MCF 10A (cell line): ENCODE measurements at regions of chr7 and their contacts with region 1.

Region 1: GRCh38 chr7:121126801-121127534 is 138.5 kb downstream of the CPED1 start:
- DNase-seq: peak; percentile 39
- H3K4me3 Mint-ChIP-seq: no peak overlapping the region
- H3K27ac Mint-ChIP-seq: no peak overlapping the region
- H3K4me1 Mint-ChIP-seq: no peaks in the 10 kb centered on the region
- H3K27me3 Mint-ChIP-seq: no peaks in the 10 kb centered on the region
- CTCF ChIP-seq: peak; percentile 39

Region 2: DNA sequence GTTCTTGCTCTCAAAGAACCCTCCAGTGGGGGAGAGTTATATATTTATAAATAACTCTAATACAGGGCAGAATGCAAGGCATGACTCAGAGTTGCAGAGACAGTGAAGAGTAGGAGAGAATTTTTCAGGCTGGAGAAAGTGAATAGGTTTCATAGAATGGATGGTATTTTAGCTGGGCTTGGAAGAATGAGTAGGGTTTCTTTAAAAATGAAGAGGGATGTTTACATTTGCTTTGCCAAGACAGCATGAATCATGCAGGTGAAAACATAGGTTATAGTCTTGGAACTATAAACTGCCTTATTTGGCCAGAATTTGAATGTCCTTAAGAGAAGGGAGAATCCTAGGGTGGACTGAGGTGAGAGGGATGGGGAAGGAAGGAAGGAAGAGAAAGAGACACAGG is 13.7 kb before region 1 on chr7:
- CTCF ChIA-PET with region 1: no interaction called
- POLR2A ChIA-PET with region 1: no interaction called
- intact Hi-C with region 1: no loop called
- DNase-seq: peak; percentile 41
- H3K4me3 Mint-ChIP-seq: no peak overlapping the region
- H3K27ac Mint-ChIP-seq: no peak overlapping the region
- H3K4me1 Mint-ChIP-seq: no peaks in the 10 kb centered on the region
- H3K27me3 Mint-ChIP-seq: no peaks in the 10 kb centered on the region
- CTCF ChIP-seq: no peak

Region 3: DNA sequence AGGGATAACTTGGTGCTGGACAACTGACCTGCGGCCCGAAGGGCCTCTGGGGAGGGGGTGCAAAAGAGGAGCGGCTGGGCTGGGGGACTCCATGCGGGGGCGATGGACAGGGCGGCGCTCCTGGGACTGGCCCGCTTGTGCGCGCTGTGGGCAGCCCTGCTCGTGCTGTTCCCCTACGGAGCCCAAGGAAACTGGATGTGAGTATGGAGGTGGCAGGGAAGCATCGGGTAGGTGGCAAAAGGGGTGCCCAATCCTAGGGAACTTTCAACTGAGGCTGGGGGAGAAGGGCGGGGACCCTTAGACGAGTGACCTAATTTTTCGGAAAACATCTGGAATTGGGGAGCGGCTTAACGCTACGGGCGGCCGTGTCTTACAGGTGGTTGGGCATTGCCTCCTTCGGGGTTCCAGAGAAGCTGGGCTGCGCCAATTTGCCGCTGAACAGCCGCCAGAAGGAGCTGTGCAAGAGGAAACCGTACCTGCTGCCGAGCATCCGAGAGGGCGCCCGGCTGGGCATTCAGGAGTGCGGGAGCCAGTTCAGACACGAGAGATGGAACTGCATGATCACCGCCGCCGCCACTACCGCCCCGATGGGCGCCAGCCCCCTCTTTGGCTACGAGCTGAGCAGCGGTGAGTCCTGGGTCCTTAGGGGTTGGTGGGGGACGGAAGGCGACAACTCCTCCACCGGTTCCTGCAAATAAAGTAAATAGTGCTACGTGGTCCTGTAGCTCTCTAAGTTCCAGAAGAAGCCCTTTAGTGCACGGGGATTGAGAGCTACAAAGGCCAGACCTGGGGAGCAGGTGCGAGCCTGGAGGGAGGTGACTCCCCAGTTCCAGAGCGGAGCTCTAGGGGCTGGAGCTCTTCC is 202.5 kb after region 1 on chr7:
- CTCF ChIA-PET with region 1: no interaction called
- POLR2A ChIA-PET with region 1: no interaction called
- intact Hi-C with region 1: loop called (anchors 10 kb)
- DNase-seq: peak; percentile 41
- H3K4me3 Mint-ChIP-seq: peak overlapping the region; percentile 54
- H3K27ac Mint-ChIP-seq: no peak overlapping the region
- H3K4me1 Mint-ChIP-seq: peaks cover 5% of the 10 kb centered on the region
- H3K27me3 Mint-ChIP-seq: peaks cover 51% of the 10 kb centered on the region
- CTCF ChIP-seq: peak; percentile 12